Left ventricle myocardium superior (tissue), 1 donor: ENCODE measurements at regions of chr9 and their contacts with region 1.

Region 1: DNA sequence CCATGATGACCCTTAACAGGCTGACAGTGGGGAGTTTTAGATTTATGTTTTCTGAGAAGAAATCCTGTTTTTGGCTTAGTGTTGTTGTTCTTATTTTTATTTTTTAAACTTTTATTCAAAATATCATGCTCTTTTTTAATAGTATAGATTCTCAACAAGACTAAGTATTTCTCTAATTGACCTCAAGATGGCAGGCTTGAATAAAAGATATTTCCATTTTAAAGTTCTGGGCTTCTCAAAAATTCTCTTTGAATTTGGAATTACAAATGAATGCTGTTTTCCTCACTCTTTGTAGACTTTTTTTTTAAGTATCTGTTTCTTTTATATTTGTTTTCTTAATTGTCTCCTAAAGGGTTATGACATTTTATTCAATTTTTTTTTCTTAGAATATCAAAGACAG is 50.0 kb upstream of the SH3GL2 start:
- DNase-seq: no peak
- ATAC-seq: no peak

Region 2: GRCh38 chr9:17134396-17135294 is 394.2 kb before region 1 on chr9 and contains the start of gene CNTLN:
- intact Hi-C with region 1: no loop called
- DNase-seq: peak; percentile 99
- ATAC-seq: peak; percentile 98
- total RNA-seq, gene CNTLN: 4.2 TPM

Region 3: GRCh38 chr9:17491780-17492179 is 37.1 kb before region 1 on chr9:
- intact Hi-C with region 1: no loop called
- DNase-seq: no peak
- ATAC-seq: no peak

Region 4: DNA sequence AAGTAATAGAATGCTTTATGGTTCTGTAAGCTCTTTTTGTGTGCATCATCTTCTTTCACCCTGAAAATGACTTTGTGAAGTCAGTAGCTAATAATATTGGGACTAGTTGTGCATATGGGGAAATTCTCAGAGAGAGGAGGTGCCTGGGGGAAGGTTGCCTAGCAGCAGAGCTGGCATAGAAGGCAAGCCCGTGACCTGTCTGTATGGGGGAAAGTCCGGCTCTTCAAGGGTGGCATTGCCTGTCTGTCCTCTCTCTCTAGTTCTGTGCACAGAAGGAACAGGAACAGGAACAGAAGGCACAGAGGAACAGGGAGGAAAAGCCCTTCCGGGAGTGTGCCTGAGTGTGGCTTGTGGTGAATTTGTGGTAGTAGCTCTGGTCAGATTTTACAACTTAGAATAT is 83.1 kb after region 1 on chr9:
- intact Hi-C with region 1: no loop called
- DNase-seq: no peak
- ATAC-seq: peak; percentile 83

Region 5: GRCh38 chr9:17799383-17799782 is 270.5 kb after region 1 on chr9:
- intact Hi-C with region 1: loop called (anchors 2 kb)
- DNase-seq: no peak
- ATAC-seq: no peak

Region 6: GRCh38 chr9:18215626-18216025 is 686.8 kb after region 1 on chr9:
- intact Hi-C with region 1: loop called (anchors 10 kb)
- DNase-seq: no peak
- ATAC-seq: no peak